ENCODE measurements at regions of chr13 and their contacts with region 1.

Region 1: DNA sequence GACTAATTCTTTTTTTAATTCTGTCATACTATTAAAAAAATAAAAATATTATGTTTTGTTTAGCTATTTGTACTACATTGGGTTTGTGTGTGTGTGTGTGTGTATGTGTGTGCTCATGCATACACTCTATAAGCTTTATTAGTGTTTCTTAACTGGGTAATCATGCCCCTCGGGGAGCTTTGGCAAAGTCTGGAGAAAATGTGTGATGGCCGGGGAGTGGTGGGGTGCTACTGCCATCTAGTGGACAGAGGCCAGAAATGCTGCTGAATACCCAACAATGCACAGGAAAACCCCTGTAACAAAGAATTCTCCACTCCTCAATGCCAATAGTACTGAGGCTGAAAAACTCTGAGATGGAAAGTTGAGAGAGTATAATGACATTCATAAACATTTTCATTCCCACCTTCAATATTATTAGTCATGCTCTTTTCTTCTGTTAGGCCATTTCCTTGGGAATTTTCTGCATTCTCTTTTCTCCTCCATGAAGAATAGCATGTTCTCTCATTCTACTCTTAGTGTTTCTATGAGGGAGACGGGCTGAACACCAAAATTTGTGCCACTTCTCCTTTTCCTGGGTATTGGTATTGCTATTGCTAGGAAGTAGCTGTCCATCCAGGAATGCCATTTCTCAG is 157.3 kb downstream of the DNAJC3 start:
- DNase-seq: peak; percentile 33 to 81 (median 64)
- ATAC-seq: peak; percentile 77
- H3K4me3 ChIP-seq: no peak overlapping the region
- H3K4me3 Mint-ChIP-seq: no peak overlapping the region
- H3K27ac ChIP-seq: no peak overlapping the region
- H3K27ac Mint-ChIP-seq: no peak overlapping the region
- H3K4me1 ChIP-seq: no peaks in the 10 kb centered on the region
- H3K4me1 Mint-ChIP-seq: no peaks in the 10 kb centered on the region
- H3K27me3 ChIP-seq: no peaks in the 10 kb centered on the region
- H3K27me3 Mint-ChIP-seq: peaks cover 4% of the 10 kb centered on the region
- CTCF ChIP-seq: peak; percentile 96

Region 2: GRCh38 chr13:95181586-95181985 is 652.7 kb before region 1 on chr13:
- CTCF ChIA-PET with region 1: no interaction called
- POLR2A ChIA-PET with region 1: no interaction called
- intact Hi-C with region 1: loop called in 1 of 2 experiments (anchors 10 kb)
- DNase-seq: no peak
- ATAC-seq: no peak
- H3K4me3 ChIP-seq: no peak overlapping the region
- H3K4me3 Mint-ChIP-seq: no peak overlapping the region
- H3K27ac ChIP-seq: no peak overlapping the region
- H3K27ac Mint-ChIP-seq: no peak overlapping the region
- H3K4me1 ChIP-seq: peaks cover 49% of the 10 kb centered on the region
- H3K4me1 Mint-ChIP-seq: peaks cover 82% of the 10 kb centered on the region
- H3K27me3 ChIP-seq: no peaks in the 10 kb centered on the region
- H3K27me3 Mint-ChIP-seq: no peaks in the 10 kb centered on the region
- CTCF ChIP-seq: no peak

Region 3: GRCh38 chr13:95403828-95404522 is 430.3 kb before region 1 on chr13:
- CTCF ChIA-PET with region 1: interaction called, 3 read pairs
- POLR2A ChIA-PET with region 1: no interaction called
- intact Hi-C with region 1: loop called in 1 of 2 experiments (anchors 5 kb)
- DNase-seq: peak; percentile 52 to 86 (median 76)
- ATAC-seq: peak; percentile 94
- H3K4me3 ChIP-seq: peak overlapping the region; percentile 58 to 69
- H3K4me3 Mint-ChIP-seq: peak overlapping the region; percentile 91
- H3K27ac ChIP-seq: no peak overlapping the region
- H3K27ac Mint-ChIP-seq: no peak overlapping the region
- H3K4me1 ChIP-seq: peaks cover 8% of the 10 kb centered on the region
- H3K4me1 Mint-ChIP-seq: peaks cover 8% of the 10 kb centered on the region
- H3K27me3 ChIP-seq: no peaks in the 10 kb centered on the region
- H3K27me3 Mint-ChIP-seq: peaks cover 3% of the 10 kb centered on the region
- CTCF ChIP-seq: peak; percentile 93

Region 4: DNA sequence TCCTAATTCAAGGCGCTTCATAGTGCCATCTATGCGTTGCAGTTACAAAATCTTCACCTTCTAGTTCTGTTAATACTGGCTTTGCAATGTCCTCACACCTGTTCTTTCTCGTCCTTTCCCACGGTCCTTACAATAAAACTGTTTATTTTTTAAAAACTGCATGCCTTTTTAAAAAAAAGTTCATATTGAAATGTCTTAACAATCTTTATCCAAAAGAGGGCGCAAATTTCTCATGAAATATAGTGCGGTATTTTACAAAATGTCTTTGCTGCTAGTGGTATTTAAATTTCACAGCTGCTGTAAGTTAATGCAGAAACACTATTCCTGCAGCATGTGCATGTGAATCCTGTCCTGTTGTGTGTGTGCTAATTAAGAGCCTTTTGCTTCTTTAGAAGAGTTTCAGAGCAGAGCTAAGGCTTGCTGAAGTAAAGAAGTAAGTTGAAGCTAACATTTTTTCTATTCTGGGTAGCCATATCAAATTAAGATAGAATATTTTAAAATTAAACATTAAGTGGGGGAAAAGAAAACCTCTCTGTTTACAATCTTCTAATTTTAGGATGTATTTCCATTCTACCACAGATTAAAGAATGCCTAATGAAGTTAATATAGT is 297.5 kb before region 1 on chr13:
- CTCF ChIA-PET with region 1: interaction called, 24 read pairs
- POLR2A ChIA-PET with region 1: no interaction called
- intact Hi-C with region 1: loop called (anchors 1 kb)
- DNase-seq: peak in 1 of 9 experiments; percentile 13
- ATAC-seq: no peak
- H3K4me3 ChIP-seq: no peak overlapping the region
- H3K4me3 Mint-ChIP-seq: no peak overlapping the region
- H3K27ac ChIP-seq: no peak overlapping the region
- H3K27ac Mint-ChIP-seq: no peak overlapping the region
- H3K4me1 ChIP-seq: no peaks in the 10 kb centered on the region
- H3K4me1 Mint-ChIP-seq: no peaks in the 10 kb centered on the region
- H3K27me3 ChIP-seq: no peaks in the 10 kb centered on the region
- H3K27me3 Mint-ChIP-seq: peaks cover 19% of the 10 kb centered on the region
- CTCF ChIP-seq: peak; percentile 43

Region 5: DNA sequence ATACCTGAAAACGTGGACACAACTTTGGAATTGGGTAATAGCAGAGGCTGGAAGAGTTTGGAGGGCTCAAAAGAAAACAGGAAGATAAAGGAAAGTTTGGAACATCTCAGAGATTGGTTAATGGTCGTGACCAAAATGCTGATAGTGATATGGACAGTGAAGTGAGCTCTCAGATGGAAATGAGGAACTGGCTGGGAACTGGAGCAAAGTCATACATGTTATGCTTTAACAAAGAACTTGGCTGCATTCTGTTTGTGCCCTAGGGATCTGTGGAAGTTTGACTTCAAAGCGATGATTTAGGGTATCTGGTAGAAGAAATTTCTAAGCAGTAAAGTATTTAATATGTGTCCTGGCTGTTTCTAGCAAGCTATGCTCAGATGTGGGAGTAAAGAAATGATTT is 21.1 kb before region 1 on chr13:
- CTCF ChIA-PET with region 1: interaction called, 14 read pairs
- POLR2A ChIA-PET with region 1: no interaction called
- intact Hi-C with region 1: no loop called
- DNase-seq: no peak
- ATAC-seq: no peak
- H3K4me3 ChIP-seq: no peak overlapping the region
- H3K4me3 Mint-ChIP-seq: no peak overlapping the region
- H3K27ac ChIP-seq: no peak overlapping the region
- H3K27ac Mint-ChIP-seq: no peak overlapping the region
- H3K4me1 ChIP-seq: no peaks in the 10 kb centered on the region
- H3K4me1 Mint-ChIP-seq: no peaks in the 10 kb centered on the region
- H3K27me3 ChIP-seq: peaks cover 0 to 2% of the 10 kb centered on the region in 2 experiments
- H3K27me3 Mint-ChIP-seq: peaks cover 11% of the 10 kb centered on the region
- CTCF ChIP-seq: no peak

Region 6: DNA sequence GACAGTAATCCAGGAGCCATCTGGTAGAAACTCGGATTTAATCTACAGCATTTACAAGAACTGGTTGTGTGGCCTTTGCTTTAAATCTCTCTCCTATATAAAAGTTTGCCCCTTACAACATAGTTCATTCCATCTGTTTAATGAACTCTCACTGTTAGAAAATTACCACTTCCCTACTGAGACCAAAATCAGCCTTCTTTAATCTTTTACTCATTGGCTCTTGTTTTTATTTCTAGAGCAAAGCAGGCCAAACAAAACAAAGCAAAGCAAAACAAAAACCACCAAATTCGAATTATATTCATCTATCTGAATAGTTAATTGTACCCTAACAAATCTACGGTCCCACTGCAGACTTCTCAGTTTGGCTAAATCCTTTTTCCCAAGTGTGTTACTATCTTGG is 92.0 kb after region 1 on chr13:
- CTCF ChIA-PET with region 1: no interaction called
- POLR2A ChIA-PET with region 1: no interaction called
- intact Hi-C with region 1: no loop called
- DNase-seq: no peak
- ATAC-seq: no peak
- H3K4me3 ChIP-seq: no peak overlapping the region
- H3K4me3 Mint-ChIP-seq: no peak overlapping the region
- H3K27ac ChIP-seq: no peak overlapping the region
- H3K27ac Mint-ChIP-seq: no peak overlapping the region
- H3K4me1 ChIP-seq: no peaks in the 10 kb centered on the region
- H3K4me1 Mint-ChIP-seq: no peaks in the 10 kb centered on the region
- H3K27me3 ChIP-seq: no peaks in the 10 kb centered on the region
- H3K27me3 Mint-ChIP-seq: no peaks in the 10 kb centered on the region
- CTCF ChIP-seq: no peak

Measured in CD8-positive, alpha-beta T cell (primary cell).